ENCODE measurements at regions of chr16 and their contacts with region 1.

Region 1: GRCh38 chr16:30395155-30395991 is at the start of gene ZNF48:
- DNase-seq: peak; percentile 89
- H3K4me3 ChIP-seq: peak within 1 kb of the TSS; percentile 46 to 85 (median 81)
- H3K27ac ChIP-seq: peak within 1 kb of the TSS; percentile 66
- H3K4me1 ChIP-seq: peaks cover 21% of the 10 kb centered on the region
- H3K27me3 ChIP-seq: no peaks in the 10 kb centered on the region
- CTCF ChIP-seq: peak; percentile 23 to 36
- POLR2A ChIP-seq: peak; percentile 17
- total RNA-seq, gene ZNF48: 15.1 and 15.3 TPM in 2 replicates

Region 2: GRCh38 chr16:30355144-30355894 is 40.1 kb before region 1 on chr16 and contains the start of gene CD2BP2:
- CTCF ChIA-PET with region 1: interaction called, 3 read pairs
- POLR2A ChIA-PET with region 1: no interaction called
- dilution Hi-C with region 1: no loop called
- intact Hi-C with region 1: loop called (anchors 1 kb)
- DNase-seq: peak; percentile 98
- H3K4me3 ChIP-seq: peak within 1 kb of the TSS; percentile 65 to 84 (median 78)
- H3K27ac ChIP-seq: peak within 1 kb of the TSS; percentile 95
- H3K4me1 ChIP-seq: peaks cover 32% of the 10 kb centered on the region
- H3K27me3 ChIP-seq: no peaks in the 10 kb centered on the region
- CTCF ChIP-seq: peak in 1 of 2 donors; percentile 2
- POLR2A ChIP-seq: peak; percentile 57
- total RNA-seq, gene CD2BP2: 75.7 and 76.4 TPM in 2 replicates

Region 3: DNA sequence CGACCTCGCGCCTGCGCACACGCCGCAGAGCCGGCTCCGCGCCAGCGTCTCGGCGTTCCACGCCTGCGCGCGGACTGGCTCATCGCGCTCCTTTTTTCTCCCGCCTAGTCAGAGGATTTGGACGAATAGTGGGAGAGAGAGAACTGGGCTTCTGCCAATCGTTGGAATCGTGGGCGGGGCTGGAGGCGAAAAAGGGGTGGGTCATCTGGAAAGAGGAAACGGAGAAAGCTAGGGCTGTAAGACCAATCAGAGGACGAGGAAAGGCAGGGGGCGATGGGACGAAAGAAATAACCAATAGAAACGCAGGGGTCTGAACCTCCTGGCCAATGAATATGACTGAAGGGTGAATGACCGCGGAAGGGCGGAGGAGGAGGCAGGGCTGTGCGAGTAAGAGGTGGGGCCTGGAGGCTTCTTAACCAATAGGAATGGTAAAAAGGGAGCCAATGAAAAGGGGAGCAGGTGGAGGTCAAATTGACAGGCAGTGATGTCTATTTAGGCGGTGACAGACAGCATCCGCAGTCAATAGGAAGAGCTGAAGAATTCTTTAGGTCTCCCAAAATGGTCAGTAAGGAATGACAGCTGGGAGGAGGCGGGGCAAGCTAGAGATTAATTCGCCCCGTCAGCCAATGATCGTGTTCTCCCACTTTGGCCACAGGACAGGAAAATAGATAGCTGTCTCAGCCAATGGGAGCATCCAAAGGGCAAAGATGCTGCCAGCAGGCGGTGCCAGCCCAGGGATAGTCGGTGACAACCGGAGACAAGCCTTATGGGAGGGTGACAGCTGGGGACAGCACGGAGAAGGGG is 24.7 kb before region 1 on chr16 and contains the start of gene TBC1D10B:
- CTCF ChIA-PET with region 1: interaction called, 11 read pairs
- POLR2A ChIA-PET with region 1: interaction called, 7 read pairs
- dilution Hi-C with region 1: no loop called
- intact Hi-C with region 1: loop called (anchors 1 kb)
- DNase-seq: peak; percentile 100
- H3K4me3 ChIP-seq: peak within 1 kb of the TSS; percentile 49 to 83 (median 70)
- H3K27ac ChIP-seq: peak within 1 kb of the TSS; percentile 42
- H3K4me1 ChIP-seq: peaks cover 24% of the 10 kb centered on the region
- H3K27me3 ChIP-seq: no peaks in the 10 kb centered on the region
- CTCF ChIP-seq: peak; percentile 4 to 28
- POLR2A ChIP-seq: no peak
- total RNA-seq, gene TBC1D10B: 57.4 and 63.0 TPM in 2 replicates

Region 4: DNA sequence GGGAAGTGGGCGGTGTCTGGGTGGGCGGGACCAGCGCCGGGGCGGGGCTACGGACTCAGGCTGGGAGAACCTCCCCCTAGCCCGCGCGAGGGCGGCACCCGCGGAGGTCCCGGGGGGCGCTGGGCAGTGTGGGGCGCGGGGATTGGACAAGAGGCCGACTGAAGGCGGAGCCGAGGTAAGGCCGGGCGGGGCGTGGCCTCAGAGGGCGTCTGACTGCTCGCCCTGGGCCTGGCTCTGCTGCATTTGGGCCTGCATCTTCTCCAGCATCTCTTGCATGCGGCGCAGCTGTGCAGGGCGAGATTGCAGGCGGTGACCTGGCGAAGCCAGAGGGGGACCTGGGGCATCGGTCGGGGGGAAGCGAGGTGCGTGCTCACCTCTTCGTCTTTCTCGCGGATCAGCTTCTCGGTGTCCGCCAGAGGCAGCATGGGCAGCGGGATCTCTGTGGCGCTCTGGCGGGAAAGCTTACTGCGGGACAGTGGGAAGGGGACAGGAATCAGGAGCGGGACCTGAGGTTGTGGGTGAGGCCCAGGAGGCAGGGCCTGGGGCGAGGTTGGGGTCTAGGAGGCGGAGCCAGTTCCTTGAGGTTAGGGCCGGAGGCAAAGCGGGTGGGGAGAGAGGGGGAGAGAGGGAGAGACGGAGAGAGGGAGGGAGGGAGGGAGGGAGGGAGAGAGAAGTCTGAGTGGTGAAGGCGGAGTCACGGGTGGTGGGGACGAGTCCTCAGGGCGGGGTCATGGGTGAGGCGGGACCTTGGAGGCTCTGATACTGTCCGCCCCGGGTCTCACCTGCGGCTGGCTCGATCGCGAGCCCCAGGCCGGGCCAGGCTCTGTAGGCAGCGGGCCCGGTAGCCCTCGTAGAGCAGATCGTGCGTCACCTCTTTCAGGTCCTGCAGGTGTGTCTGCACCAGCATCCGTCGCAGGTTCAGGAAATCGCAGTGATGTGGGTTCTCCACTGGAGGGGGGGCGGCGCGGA is 16.9 kb before region 1 on chr16:
- CTCF ChIA-PET with region 1: interaction called, 10 read pairs
- POLR2A ChIA-PET with region 1: interaction called, 5 read pairs
- dilution Hi-C with region 1: no loop called
- intact Hi-C with region 1: loop called (anchors 1 kb)
- DNase-seq: peak; percentile 99
- H3K4me3 ChIP-seq: peak overlapping the region; percentile 61 to 83 (median 71)
- H3K27ac ChIP-seq: peak overlapping the region; percentile 98
- H3K4me1 ChIP-seq: peaks cover 12% of the 10 kb centered on the region
- H3K27me3 ChIP-seq: no peaks in the 10 kb centered on the region
- CTCF ChIP-seq: peak; percentile 6 to 34
- POLR2A ChIP-seq: peak; percentile 82

Region 5: GRCh38 chr16:30417529-30418349 is 22.4 kb after region 1 on chr16:
- CTCF ChIA-PET with region 1: interaction called, 6 read pairs
- POLR2A ChIA-PET with region 1: interaction called, 8 read pairs
- dilution Hi-C with region 1: no loop called
- intact Hi-C with region 1: loop called (anchors 1 kb)
- DNase-seq: peak; percentile 96
- H3K4me3 ChIP-seq: peak overlapping the region in 2 of 3 experiments; percentile 44 to 57
- H3K27ac ChIP-seq: no peak overlapping the region
- H3K4me1 ChIP-seq: peaks cover 3% of the 10 kb centered on the region
- H3K27me3 ChIP-seq: no peaks in the 10 kb centered on the region
- CTCF ChIP-seq: peak in 1 of 2 donors; percentile 37
- POLR2A ChIP-seq: peak; percentile 42

Region 6: DNA sequence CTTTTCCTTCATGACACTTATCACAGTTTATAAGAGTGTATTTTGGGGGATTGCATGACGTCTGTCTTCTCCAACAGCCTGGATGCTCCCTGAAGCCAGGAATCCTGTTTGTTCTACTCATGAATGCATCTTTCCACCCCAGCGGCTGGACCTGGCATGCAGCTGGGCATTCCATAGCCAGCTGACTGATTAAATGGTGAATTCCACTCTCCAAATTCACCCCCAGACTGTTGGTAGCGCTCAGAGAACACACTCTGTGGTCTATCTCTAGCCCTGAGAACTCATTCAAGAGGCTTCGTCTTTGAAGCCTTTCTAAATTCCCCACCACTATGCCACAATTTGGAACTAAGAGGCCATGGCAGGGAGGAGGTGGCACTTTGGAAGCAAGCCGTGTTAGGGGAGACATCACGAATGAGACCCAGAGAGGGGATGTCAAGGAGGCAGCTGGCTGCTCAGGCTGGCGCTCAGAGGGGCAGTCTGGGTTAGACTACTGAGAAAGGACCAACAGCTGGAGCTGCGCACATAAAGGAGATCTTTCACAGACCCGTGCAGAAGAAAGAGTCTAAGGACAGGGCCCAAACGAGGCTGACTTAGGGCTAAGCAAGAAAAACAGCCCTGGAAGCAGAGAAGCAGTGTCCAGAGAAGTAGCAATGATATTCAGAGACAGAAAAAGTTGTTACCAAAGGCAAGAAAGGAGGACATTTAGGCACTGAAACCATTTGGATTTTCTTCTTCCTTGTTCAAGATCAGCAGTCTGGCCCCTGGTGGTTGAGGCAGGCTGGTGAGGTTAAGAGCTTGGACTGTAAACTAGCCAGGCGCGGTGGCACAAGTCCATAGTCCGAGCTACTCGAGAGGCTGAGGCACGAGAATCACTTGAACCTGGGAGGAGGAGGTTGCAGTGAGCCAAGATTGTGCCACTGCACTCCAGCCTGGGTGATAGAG is 434.0 kb after region 1 on chr16:
- CTCF ChIA-PET with region 1: no interaction called
- POLR2A ChIA-PET with region 1: no interaction called
- dilution Hi-C with region 1: no loop called
- intact Hi-C with region 1: no loop called
- DNase-seq: no peak
- H3K4me3 ChIP-seq: no peak overlapping the region
- H3K27ac ChIP-seq: no peak overlapping the region
- H3K4me1 ChIP-seq: no peaks in the 10 kb centered on the region
- H3K27me3 ChIP-seq: peaks cover 0 to 4% of the 10 kb centered on the region in 2 experiments
- CTCF ChIP-seq: no peak
- POLR2A ChIP-seq: no peak